Endothelial cell of umbilical vein (primary cell): ENCODE measurements at regions of chr1 and their contacts with region 1.

Region 1: DNA sequence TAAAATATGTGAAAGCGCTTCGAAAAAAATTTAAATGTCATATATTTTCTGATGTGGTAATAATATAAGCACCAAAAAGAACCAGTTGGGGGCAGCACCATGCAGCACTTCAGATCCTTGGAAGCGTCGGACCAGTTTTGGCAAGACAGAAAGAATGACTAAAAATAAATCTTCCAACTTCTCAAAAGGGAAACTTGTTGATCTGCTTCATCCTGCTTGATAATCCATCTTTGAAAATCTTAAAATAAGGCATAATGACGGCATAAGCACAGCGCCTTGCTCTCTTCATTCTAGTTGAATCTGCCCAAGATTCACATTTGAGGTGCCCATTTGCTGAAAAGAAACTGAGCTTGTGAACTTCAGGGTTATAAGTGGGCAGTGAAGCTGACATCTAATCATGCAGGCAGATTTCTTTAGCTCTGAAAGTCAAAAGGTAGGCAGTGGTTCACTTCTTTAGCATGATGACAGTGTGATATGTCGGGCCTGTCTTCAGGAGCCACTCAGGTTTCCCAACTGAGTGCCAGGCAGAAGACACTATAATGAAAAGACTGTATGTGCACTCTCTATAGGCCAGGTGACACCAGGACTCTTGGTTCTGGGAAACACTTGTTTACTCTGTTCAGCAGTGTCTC is 19.8 kb upstream of the MUTYH start:
- DNase-seq: peak; percentile 74
- H3K4me3 ChIP-seq: no peak overlapping the region
- H3K27ac ChIP-seq: no peak overlapping the region
- H3K4me1 ChIP-seq: peaks cover 7% of the 10 kb centered on the region
- H3K27me3 ChIP-seq: no peaks in the 10 kb centered on the region
- CTCF ChIP-seq: peak; percentile 47 to 64
- POLR2A ChIP-seq: no peak

Region 2: GRCh38 chr1:43587594-43587993 is 1772.4 kb before region 1 on chr1:
- CTCF ChIA-PET with region 1: no interaction called
- POLR2A ChIA-PET with region 1: no interaction called
- dilution Hi-C with region 1: no loop called
- intact Hi-C with region 1: no loop called
- DNase-seq: no peak
- H3K4me3 ChIP-seq: no peak overlapping the region
- H3K27ac ChIP-seq: no peak overlapping the region
- H3K4me1 ChIP-seq: no peaks in the 10 kb centered on the region
- H3K27me3 ChIP-seq: no peaks in the 10 kb centered on the region
- CTCF ChIP-seq: no peak
- POLR2A ChIP-seq: no peak

Region 3: DNA sequence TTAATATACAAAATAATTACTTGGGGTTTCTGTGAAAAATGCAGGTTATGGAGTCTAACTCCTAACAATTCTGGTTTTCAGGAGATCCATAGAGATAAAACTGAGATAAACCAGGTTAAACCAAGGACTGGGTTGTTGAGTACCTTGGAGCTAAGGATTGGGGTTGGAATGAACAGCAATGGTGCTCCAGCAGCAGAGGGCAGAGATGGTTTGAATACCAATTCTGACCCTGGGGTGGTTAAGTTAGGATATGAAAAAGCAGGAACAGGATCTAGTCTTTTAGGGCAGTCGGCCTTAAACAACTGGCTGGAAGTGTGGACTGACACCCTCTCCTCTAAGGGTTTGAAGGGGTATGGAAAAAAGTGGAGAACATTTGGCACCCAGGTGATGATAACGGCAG is 294.9 kb before region 1 on chr1:
- CTCF ChIA-PET with region 1: no interaction called
- POLR2A ChIA-PET with region 1: no interaction called
- dilution Hi-C with region 1: no loop called
- intact Hi-C with region 1: no loop called
- DNase-seq: no peak
- H3K4me3 ChIP-seq: no peak overlapping the region
- H3K27ac ChIP-seq: no peak overlapping the region
- H3K4me1 ChIP-seq: no peaks in the 10 kb centered on the region
- H3K27me3 ChIP-seq: no peaks in the 10 kb centered on the region
- CTCF ChIP-seq: no peak
- POLR2A ChIP-seq: no peak

Region 4: GRCh38 chr1:45478121-45478814 is 118.3 kb after region 1 on chr1:
- CTCF ChIA-PET with region 1: interaction called, 10 read pairs
- POLR2A ChIA-PET with region 1: no interaction called
- dilution Hi-C with region 1: loop called (anchors 25 kb)
- intact Hi-C with region 1: no loop called
- DNase-seq: no peak
- H3K4me3 ChIP-seq: no peak overlapping the region
- H3K27ac ChIP-seq: no peak overlapping the region
- H3K4me1 ChIP-seq: no peaks in the 10 kb centered on the region
- H3K27me3 ChIP-seq: no peaks in the 10 kb centered on the region
- CTCF ChIP-seq: no peak
- POLR2A ChIP-seq: no peak

Region 5: DNA sequence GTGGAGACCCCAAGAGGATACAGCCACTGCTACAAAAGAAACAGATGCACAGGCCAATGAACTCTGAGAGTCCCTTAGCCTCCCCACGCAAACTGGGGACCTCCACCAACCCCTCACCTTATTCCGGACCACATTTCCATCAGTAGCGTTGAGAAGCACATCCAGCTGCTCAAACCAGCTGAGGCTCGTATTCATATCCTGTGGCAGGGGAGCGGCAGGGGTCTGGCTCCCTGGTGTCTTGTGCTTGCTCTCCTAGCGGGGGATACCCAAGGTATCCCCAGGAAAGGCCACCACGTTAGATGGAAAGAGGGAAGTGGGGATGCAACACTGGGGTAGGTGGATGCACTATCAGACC is 139.4 kb after region 1 on chr1:
- CTCF ChIA-PET with region 1: interaction called, 457 read pairs
- POLR2A ChIA-PET with region 1: no interaction called
- dilution Hi-C with region 1: loop called (anchors 25 kb)
- intact Hi-C with region 1: no loop called
- DNase-seq: peak; percentile 12
- H3K4me3 ChIP-seq: peak overlapping the region; percentile 23 to 80 (median 54)
- H3K27ac ChIP-seq: no peak overlapping the region
- H3K4me1 ChIP-seq: peaks cover 11% of the 10 kb centered on the region
- H3K27me3 ChIP-seq: no peaks in the 10 kb centered on the region
- CTCF ChIP-seq: no peak
- POLR2A ChIP-seq: no peak

Region 6: GRCh38 chr1:45545019-45545493 is 185.1 kb after region 1 on chr1:
- CTCF ChIA-PET with region 1: no interaction called
- POLR2A ChIA-PET with region 1: no interaction called
- dilution Hi-C with region 1: no loop called
- intact Hi-C with region 1: no loop called
- DNase-seq: peak; percentile 38
- H3K4me3 ChIP-seq: no peak overlapping the region
- H3K27ac ChIP-seq: peak overlapping the region; percentile 19
- H3K4me1 ChIP-seq: peaks cover 27% of the 10 kb centered on the region
- H3K27me3 ChIP-seq: no peaks in the 10 kb centered on the region
- CTCF ChIP-seq: no peak
- POLR2A ChIP-seq: no peak